GM13977 (cell line): ENCODE measurements at regions of chr6 and their contacts with region 1.

Region 1: GRCh38 chr6:130843575-130844320 is 16.5 kb downstream of the SMLR1 start:
- DNase-seq: peak; percentile 21
- CTCF ChIP-seq: peak; percentile 59

Region 2: GRCh38 chr6:130322673-130323268 is 521.0 kb before region 1 on chr6:
- in situ Hi-C with region 1: loop called (anchors 25 kb)
- DNase-seq: peak; percentile 21
- CTCF ChIP-seq: peak; percentile 89